Spleen (tissue), 13 donors: ENCODE measurements at regions of chr6 and their contacts with region 1.

Region 1: GRCh38 chr6:118651282-118652050 is at the start of gene CEP85L:
- DNase-seq: peak; percentile 98
- H3K4me3 ChIP-seq: peak within 1 kb of the TSS; percentile 59 to 92 (median 81)
- H3K27ac ChIP-seq: peak within 1 kb of the TSS; percentile 92 to 97 (median 96)
- H3K4me1 ChIP-seq: peaks cover 5 to 53% (median 20%) of the 10 kb centered on the region in 6 donors
- H3K27me3 ChIP-seq: no peaks in the 10 kb centered on the region
- CTCF ChIP-seq: peak in 2 of 11 experiments; percentile 15 to 42
- POLR2A ChIP-seq: peak in 1 of 3 donors; percentile 77
- total RNA-seq, gene CEP85L: 26.0 to 46.5 (median 33.4) TPM

Region 2: DNA sequence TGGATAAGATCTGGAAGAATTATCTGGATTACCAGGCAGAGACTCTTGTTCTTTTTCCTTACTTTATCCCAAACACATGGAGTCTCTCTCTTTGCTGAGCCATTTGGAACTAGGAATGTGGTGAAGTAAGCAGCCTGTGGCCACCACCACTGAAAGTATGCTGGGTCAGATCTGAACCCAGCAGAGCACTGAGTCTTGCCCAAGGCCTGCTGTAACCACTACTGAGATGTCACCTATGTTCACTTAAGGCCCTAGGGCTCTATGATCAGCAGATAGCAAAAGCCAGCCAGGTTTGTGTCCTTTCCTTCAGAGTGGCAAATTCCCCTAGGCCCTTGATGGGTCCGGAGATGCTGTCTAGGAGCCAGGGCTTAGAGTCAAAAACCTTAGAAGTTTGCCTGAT is 206.7 kb before region 1 on chr6:
- intact Hi-C with region 1: no loop called
- DNase-seq: no peak
- H3K4me3 ChIP-seq: no peak overlapping the region
- H3K27ac ChIP-seq: no peak overlapping the region
- H3K4me1 ChIP-seq: no peaks in the 10 kb centered on the region
- H3K27me3 ChIP-seq: no peaks in the 10 kb centered on the region
- CTCF ChIP-seq: no peak
- POLR2A ChIP-seq: no peak

Region 3: GRCh38 chr6:118501765-118502164 is 149.7 kb before region 1 on chr6:
- intact Hi-C with region 1: no loop called
- DNase-seq: no peak
- H3K4me3 ChIP-seq: no peak overlapping the region
- H3K27ac ChIP-seq: no peak overlapping the region
- H3K4me1 ChIP-seq: no peaks in the 10 kb centered on the region
- H3K27me3 ChIP-seq: no peaks in the 10 kb centered on the region
- CTCF ChIP-seq: no peak
- POLR2A ChIP-seq: no peak

Region 4: DNA sequence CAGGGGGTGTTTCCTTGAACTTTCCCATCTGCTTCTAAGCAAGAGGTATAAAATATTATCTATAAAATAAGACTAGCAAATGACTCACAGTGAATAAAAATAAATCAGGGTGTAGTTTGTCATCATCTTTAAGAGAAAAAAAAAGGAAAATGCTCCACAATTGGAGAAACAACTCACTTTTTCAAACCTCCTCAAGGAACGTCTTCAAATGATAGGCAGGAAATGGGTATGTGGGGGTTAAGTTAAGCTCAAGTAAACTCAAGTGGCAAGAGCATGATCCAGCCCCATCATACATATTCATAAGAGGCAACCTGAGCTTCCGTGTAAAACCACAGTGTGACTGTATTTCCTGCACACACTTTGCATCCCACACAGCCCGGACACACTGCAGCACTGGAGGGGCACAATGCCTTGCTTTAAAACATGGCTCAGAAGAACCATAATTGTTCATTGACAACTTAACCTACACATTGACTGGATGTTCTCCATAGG is 58.4 kb after region 1 on chr6:
- intact Hi-C with region 1: loop called (anchors 10 kb)
- DNase-seq: peak; percentile 86
- H3K4me3 ChIP-seq: peak overlapping the region; percentile 45 to 79 (median 52)
- H3K27ac ChIP-seq: peak overlapping the region; percentile 70 to 91 (median 87)
- H3K4me1 ChIP-seq: peaks cover 36 to 71% (median 54%) of the 10 kb centered on the region in 6 donors
- H3K27me3 ChIP-seq: no peaks in the 10 kb centered on the region
- CTCF ChIP-seq: no peak
- POLR2A ChIP-seq: peak in 1 of 3 donors; percentile 50

Region 5: GRCh38 chr6:118776607-118777549 is 125.4 kb after region 1 on chr6:
- intact Hi-C with region 1: loop called (anchors 10 kb)
- DNase-seq: no peak
- H3K4me3 ChIP-seq: no peak overlapping the region
- H3K27ac ChIP-seq: no peak overlapping the region
- H3K4me1 ChIP-seq: peaks cover 3 to 23% (median 10%) of the 10 kb centered on the region in 6 donors
- H3K27me3 ChIP-seq: no peaks in the 10 kb centered on the region
- CTCF ChIP-seq: peak; percentile 69 to 87 (median 80)
- POLR2A ChIP-seq: no peak